ENCODE measurements at regions of chr16 and their contacts with region 1.

Region 1: DNA sequence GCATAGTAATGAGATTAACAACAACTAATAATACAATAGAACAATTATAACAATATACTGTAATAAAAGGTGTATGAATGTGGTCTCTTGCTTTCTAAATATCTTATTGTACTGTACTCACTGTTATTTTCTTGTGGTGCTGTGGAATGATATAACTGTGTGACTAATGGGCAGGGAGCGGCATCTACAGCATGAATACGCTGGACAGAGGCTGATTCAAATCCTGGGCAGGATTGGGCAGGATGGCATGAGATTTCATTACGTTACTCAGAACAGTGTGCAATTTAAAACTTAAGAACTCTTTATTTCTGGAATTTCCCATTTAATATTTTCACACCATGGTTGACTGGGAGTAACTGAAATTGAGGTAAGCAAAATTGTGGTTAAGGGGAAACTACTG is 1239.8 kb upstream of the GOT2 start:
- DNase-seq: peak; percentile 94
- H3K4me3 ChIP-seq: no peak overlapping the region
- H3K27ac ChIP-seq: peak overlapping the region; percentile 82
- H3K4me1 ChIP-seq: peaks cover 18% of the 10 kb centered on the region
- H3K27me3 ChIP-seq: no peaks in the 10 kb centered on the region
- CTCF ChIP-seq: no peak

Region 2: DNA sequence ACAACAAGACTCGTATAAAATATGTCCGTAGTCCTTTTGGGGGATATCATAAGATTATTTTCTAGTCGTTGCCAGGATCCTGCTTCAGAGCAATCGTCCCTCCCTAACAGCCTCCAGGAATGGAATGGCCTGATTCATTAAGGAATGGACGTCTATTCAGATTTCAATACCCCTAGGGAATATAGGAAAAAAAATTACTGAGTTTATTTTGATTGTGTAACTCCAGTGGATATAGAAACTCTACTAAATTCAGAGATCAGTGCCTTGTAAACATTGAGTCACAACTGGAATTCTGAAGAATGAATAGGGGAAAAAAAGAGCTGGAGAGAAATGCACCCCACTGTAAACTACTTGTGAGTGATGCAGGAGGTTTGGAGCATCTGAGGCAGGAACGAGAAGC is 68.4 kb before region 1 on chr16:
- CTCF ChIA-PET with region 1: no interaction called
- dilution Hi-C with region 1: no loop called
- in situ Hi-C with region 1: no loop called
- intact Hi-C with region 1: loop called (anchors 5 kb)
- DNase-seq: peak; percentile 76
- H3K4me3 ChIP-seq: peak overlapping the region; percentile 9 to 27 (median 25)
- H3K27ac ChIP-seq: peak overlapping the region; percentile 99
- H3K4me1 ChIP-seq: peaks cover 36% of the 10 kb centered on the region
- H3K27me3 ChIP-seq: no peaks in the 10 kb centered on the region
- CTCF ChIP-seq: no peak

Region 3: GRCh38 chr16:60013076-60013475 is 39.1 kb after region 1 on chr16:
- CTCF ChIA-PET with region 1: no interaction called
- dilution Hi-C with region 1: no loop called
- in situ Hi-C with region 1: no loop called
- intact Hi-C with region 1: no loop called
- DNase-seq: no peak
- H3K4me3 ChIP-seq: no peak overlapping the region
- H3K27ac ChIP-seq: no peak overlapping the region
- H3K4me1 ChIP-seq: no peaks in the 10 kb centered on the region
- H3K27me3 ChIP-seq: no peaks in the 10 kb centered on the region
- CTCF ChIP-seq: no peak

Measured in mammary epithelial cell (primary cell).